Posterior vena cava (tissue), 2 donors: ENCODE measurements at regions of chr5 and their contacts with region 1.

Region 1: GRCh38 chr5:51203598-51203997 is 179.7 kb upstream of the ISL1 start:
- DNase-seq: no peak

Region 2: GRCh38 chr5:51225791-51226735 is 22.5 kb after region 1 on chr5:
- intact Hi-C with region 1: loop called in 1 of 2 experiments (anchors 1 kb)
- DNase-seq: no peak

Region 3: GRCh38 chr5:52202256-52202655 is 998.7 kb after region 1 on chr5:
- intact Hi-C with region 1: no loop called
- DNase-seq: no peak